Endothelial cell of umbilical vein (primary cell): ENCODE measurements at regions of chr5 and their contacts with region 1.

Region 1: GRCh38 chr5:112210430-112211005 is 208.6 kb downstream of the EPB41L4A start:
- DNase-seq: peak; percentile 63
- H3K4me3 ChIP-seq: no peak overlapping the region
- H3K27ac ChIP-seq: no peak overlapping the region
- H3K4me1 ChIP-seq: no peaks in the 10 kb centered on the region
- H3K27me3 ChIP-seq: no peaks in the 10 kb centered on the region
- CTCF ChIP-seq: peak; percentile 55 to 66
- POLR2A ChIP-seq: no peak

Region 2: DNA sequence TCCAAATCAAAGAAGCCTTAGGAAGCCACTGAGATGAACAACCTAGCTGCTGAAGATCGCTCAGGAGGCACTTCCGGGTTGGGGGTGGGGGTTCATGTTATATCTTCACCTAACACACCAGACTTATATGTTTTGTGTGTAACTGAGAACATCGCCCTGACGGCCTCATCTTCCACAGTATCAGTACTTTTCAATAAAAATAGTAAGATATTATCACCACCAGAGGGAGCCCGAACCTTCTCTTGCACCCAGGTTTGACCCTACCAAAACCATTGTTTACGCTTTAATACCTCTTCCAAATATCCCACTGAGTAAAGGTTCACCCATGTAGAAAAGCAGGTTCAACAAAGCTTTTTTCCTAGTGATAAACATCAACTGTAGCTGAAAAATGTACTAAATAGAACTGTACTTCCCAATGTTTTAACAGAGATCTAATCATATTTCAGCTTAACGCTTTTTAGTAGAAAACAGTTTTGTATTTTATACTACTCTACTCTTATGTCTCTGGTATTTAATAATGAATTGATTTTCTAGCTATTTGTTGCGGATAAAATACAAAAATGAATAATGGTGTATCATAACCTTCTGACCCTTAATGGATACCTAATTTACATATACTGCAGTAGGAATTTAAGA is 35.4 kb before region 1 on chr5:
- CTCF ChIA-PET with region 1: interaction called, 7 read pairs
- POLR2A ChIA-PET with region 1: no interaction called
- dilution Hi-C with region 1: no loop called
- intact Hi-C with region 1: loop called (anchors 2 kb)
- DNase-seq: peak; percentile 58
- H3K4me3 ChIP-seq: no peak overlapping the region
- H3K27ac ChIP-seq: no peak overlapping the region
- H3K4me1 ChIP-seq: no peaks in the 10 kb centered on the region
- H3K27me3 ChIP-seq: no peaks in the 10 kb centered on the region
- CTCF ChIP-seq: peak; percentile 55 to 57
- POLR2A ChIP-seq: no peak

Region 3: GRCh38 chr5:112186401-112186990 is 24.0 kb before region 1 on chr5:
- CTCF ChIA-PET with region 1: no interaction called
- POLR2A ChIA-PET with region 1: no interaction called
- dilution Hi-C with region 1: no loop called
- intact Hi-C with region 1: loop called (anchors 1 kb)
- DNase-seq: peak; percentile 44
- H3K4me3 ChIP-seq: no peak overlapping the region
- H3K27ac ChIP-seq: no peak overlapping the region
- H3K4me1 ChIP-seq: no peaks in the 10 kb centered on the region
- H3K27me3 ChIP-seq: no peaks in the 10 kb centered on the region
- CTCF ChIP-seq: peak; percentile 40 to 44
- POLR2A ChIP-seq: no peak

Region 4: GRCh38 chr5:112366987-112367386 is 156.5 kb after region 1 on chr5:
- CTCF ChIA-PET with region 1: no interaction called
- POLR2A ChIA-PET with region 1: no interaction called
- dilution Hi-C with region 1: no loop called
- intact Hi-C with region 1: no loop called
- DNase-seq: no peak
- H3K4me3 ChIP-seq: no peak overlapping the region
- H3K27ac ChIP-seq: no peak overlapping the region
- H3K4me1 ChIP-seq: no peaks in the 10 kb centered on the region
- H3K27me3 ChIP-seq: no peaks in the 10 kb centered on the region
- CTCF ChIP-seq: peak; percentile 14 to 31
- POLR2A ChIP-seq: no peak

Region 5: GRCh38 chr5:112492291-112492690 is 281.8 kb after region 1 on chr5:
- CTCF ChIA-PET with region 1: interaction called, 9 read pairs
- POLR2A ChIA-PET with region 1: no interaction called
- dilution Hi-C with region 1: no loop called
- intact Hi-C with region 1: loop called (anchors 2 kb)
- DNase-seq: peak; percentile 92
- H3K4me3 ChIP-seq: no peak overlapping the region
- H3K27ac ChIP-seq: no peak overlapping the region
- H3K4me1 ChIP-seq: no peaks in the 10 kb centered on the region
- H3K27me3 ChIP-seq: peaks cover 0 to 4% of the 10 kb centered on the region in 2 experiments
- CTCF ChIP-seq: peak; percentile 77 to 84
- POLR2A ChIP-seq: no peak

Region 6: DNA sequence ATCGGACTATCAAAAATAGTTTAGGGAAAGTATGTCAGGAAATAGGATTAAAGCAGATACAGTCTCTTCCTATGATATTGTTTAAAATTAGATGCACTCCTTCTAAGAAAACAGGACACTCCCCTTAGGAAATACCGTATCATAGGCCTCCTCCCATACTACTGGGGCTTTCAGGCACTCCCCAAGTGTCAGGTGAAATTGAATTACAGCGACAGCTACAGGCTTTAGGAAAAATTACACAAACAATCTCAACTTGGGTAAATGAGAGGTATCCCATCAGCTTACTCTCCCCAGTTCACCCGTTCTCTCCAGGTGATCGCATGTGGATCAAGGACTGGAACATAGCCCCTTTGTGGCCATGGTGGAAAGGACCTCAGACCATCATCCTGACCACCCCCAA is 319.0 kb after region 1 on chr5:
- CTCF ChIA-PET with region 1: no interaction called
- POLR2A ChIA-PET with region 1: no interaction called
- dilution Hi-C with region 1: no loop called
- intact Hi-C with region 1: loop called (anchors 1 kb)
- DNase-seq: peak; percentile 46
- H3K4me3 ChIP-seq: no peak overlapping the region
- H3K27ac ChIP-seq: no peak overlapping the region
- H3K4me1 ChIP-seq: no peaks in the 10 kb centered on the region
- H3K27me3 ChIP-seq: peaks cover 0 to 1% of the 10 kb centered on the region in 2 experiments
- CTCF ChIP-seq: peak; percentile 35 to 42
- POLR2A ChIP-seq: no peak

Region 7: DNA sequence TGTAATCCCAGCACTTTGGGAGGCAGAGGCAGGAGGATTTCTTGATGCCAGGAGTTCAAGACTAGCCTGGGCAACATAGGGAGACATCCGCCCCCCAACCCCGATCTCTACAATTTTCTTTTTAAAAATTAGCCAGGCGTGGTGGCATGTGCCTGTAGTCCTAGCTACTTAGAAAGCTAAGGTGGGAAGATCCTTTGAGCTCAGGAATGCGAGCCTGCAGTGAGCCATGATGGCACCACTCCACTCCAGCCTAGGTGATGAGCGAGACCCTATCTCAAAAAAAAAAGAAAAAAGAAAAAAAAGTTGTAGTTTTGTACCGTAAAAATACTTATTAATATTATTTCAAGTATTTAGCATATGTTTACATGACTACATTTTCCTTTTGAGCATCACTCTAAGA is 1195.0 kb after region 1 on chr5:
- CTCF ChIA-PET with region 1: no interaction called
- POLR2A ChIA-PET with region 1: no interaction called
- dilution Hi-C with region 1: no loop called
- intact Hi-C with region 1: no loop called
- DNase-seq: no peak
- H3K4me3 ChIP-seq: no peak overlapping the region
- H3K27ac ChIP-seq: no peak overlapping the region
- H3K4me1 ChIP-seq: no peaks in the 10 kb centered on the region
- H3K27me3 ChIP-seq: peaks cover 6 to 8% of the 10 kb centered on the region in 2 experiments
- CTCF ChIP-seq: no peak
- POLR2A ChIP-seq: no peak